ENCODE measurements at regions of chr4 and their contacts with region 1.

Region 1: DNA sequence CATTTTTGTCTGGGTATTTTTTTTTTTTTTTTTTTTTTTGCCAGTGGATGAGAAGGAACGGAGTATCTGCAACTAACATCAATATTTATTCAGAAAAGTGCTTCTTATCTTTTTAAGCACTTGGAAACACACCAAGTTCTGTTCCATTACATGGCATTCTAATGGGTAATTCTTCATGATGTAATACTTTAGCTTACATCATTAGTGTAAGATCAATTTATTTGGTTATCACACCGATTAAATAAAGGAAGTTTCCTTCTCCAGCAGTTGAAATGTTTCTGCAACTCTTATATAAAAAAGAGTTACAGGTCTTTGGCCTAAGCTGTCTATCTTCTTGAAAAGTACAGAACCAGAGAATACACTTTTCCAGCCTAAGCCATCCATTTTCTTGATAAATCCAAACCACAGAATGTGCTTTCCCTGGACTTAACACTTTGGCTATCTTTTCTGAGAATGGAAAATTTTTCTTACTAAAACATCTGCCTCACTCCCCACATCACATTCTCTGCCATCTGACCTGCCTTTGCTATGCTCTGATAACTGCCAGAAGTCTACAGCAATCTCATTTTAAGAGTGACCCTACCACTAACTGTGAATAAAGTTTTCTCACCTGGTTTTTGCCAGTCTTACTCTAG is 191.9 kb upstream of the MAB21L2 start:
- DNase-seq: no peak
- ATAC-seq: no peak
- H3K4me3 Mint-ChIP-seq: no peak overlapping the region
- H3K27ac Mint-ChIP-seq: no peak overlapping the region
- H3K4me1 Mint-ChIP-seq: peaks cover 12% of the 10 kb centered on the region
- H3K27me3 Mint-ChIP-seq: no peaks in the 10 kb centered on the region
- CTCF ChIP-seq: no peak

Region 2: GRCh38 chr4:150010525-150011126 is 379.4 kb before region 1 on chr4:
- CTCF ChIA-PET with region 1: no interaction called
- POLR2A ChIA-PET with region 1: interaction called, 10 read pairs
- intact Hi-C with region 1: no loop called
- DNase-seq: no peak
- ATAC-seq: peak; percentile 37
- H3K4me3 Mint-ChIP-seq: no peak overlapping the region
- H3K27ac Mint-ChIP-seq: no peak overlapping the region
- H3K4me1 Mint-ChIP-seq: no peaks in the 10 kb centered on the region
- H3K27me3 Mint-ChIP-seq: peaks cover 5% of the 10 kb centered on the region
- CTCF ChIP-seq: no peak

Region 3: DNA sequence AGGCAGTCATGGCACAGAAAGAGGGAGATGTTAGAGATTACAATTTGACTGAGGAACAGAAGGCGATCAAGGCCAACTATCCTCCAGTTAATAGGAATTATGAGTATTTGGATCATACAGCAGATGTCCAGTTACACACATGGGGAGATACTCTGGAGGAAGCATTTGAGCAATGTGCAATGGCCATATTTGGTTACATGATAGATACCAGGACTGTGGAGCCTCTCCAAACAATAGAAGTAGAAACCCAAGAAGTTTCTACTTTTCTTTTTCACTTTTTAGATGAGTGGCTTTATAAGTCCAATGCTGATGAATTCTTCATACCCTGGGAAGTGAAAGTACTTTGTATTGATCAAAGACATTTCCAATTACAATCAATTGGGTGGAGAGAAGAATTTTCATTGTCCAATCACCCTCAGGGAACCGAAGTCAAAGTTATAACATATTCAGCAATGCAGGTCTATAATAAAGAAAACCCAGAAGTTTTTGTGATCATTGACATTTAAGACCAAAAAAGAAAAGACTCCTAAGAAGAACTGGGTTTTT is 331.0 kb after region 1 on chr4:
- CTCF ChIA-PET with region 1: no interaction called
- POLR2A ChIA-PET with region 1: no interaction called
- intact Hi-C with region 1: no loop called
- DNase-seq: no peak
- ATAC-seq: no peak
- H3K4me3 Mint-ChIP-seq: no peak overlapping the region
- H3K27ac Mint-ChIP-seq: no peak overlapping the region
- H3K4me1 Mint-ChIP-seq: no peaks in the 10 kb centered on the region
- H3K27me3 Mint-ChIP-seq: no peaks in the 10 kb centered on the region
- CTCF ChIP-seq: no peak